ENCODE measurements at regions of chr2 and their contacts with region 1.

Region 1: GRCh38 chr2:231452799-231453508 is 11.3 kb downstream of the NCL start:
- DNase-seq: peak in 1 of 2 experiments; percentile 53
- H3K4me3 ChIP-seq: no peak overlapping the region
- H3K27ac ChIP-seq: peak overlapping the region; percentile 45
- H3K4me1 ChIP-seq: no peaks in the 10 kb centered on the region
- H3K27me3 ChIP-seq: no peaks in the 10 kb centered on the region
- CTCF ChIP-seq: no peak

Region 2: GRCh38 chr2:229780856-229781773 is 1671.8 kb before region 1 on chr2:
- CTCF ChIA-PET with region 1: no interaction called
- POLR2A ChIA-PET with region 1: interaction called, 11 read pairs
- intact Hi-C with region 1: no loop called
- DNase-seq: peak; percentile 1 to 61
- H3K4me3 ChIP-seq: no peak overlapping the region
- H3K27ac ChIP-seq: peak overlapping the region; percentile 33
- H3K4me1 ChIP-seq: peaks cover 10% of the 10 kb centered on the region
- H3K27me3 ChIP-seq: no peaks in the 10 kb centered on the region
- CTCF ChIP-seq: peak; percentile 94

Region 3: GRCh38 chr2:231104115-231104713 is 348.7 kb before region 1 on chr2:
- CTCF ChIA-PET with region 1: interaction called, 5 read pairs
- POLR2A ChIA-PET with region 1: no interaction called
- intact Hi-C with region 1: loop called (anchors 1 kb)
- DNase-seq: peak in 1 of 2 experiments; percentile 31
- H3K4me3 ChIP-seq: no peak overlapping the region
- H3K27ac ChIP-seq: no peak overlapping the region
- H3K4me1 ChIP-seq: no peaks in the 10 kb centered on the region
- H3K27me3 ChIP-seq: no peaks in the 10 kb centered on the region
- CTCF ChIP-seq: peak; percentile 71

Region 4: DNA sequence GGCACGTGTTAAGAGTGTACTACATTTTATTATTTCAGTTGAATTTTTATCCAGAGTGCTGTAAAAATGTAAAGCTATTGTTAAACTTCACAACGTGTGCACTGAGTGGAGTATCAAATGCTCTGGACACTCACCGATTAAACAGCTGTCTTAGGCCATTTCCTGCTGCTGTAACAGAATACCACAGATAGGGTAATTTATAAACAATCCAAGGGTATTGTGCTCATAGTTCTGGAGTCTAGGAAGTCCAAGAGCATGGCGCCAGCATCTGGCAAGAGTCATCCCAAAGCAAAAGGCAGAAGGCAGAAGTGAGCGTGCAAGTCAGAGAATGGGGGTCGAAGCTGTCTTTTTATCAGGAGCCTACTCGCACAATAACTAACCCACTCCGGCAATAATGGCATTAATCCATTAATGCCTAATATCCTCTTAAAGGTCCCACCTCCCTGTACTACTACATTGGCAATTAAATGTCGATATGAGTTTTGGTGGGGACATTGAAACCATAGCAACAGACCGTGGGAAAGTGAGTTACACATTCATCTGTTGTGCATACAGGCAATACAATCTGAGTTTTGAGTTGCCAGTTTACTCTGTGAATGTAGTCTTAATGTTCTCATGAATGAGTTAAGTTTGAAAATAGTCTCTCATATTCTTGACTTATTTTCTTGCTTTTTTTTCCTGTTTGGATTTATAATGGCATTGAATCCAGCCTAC is 189.7 kb before region 1 on chr2:
- CTCF ChIA-PET with region 1: interaction called, 18 read pairs
- POLR2A ChIA-PET with region 1: no interaction called
- intact Hi-C with region 1: no loop called
- DNase-seq: no peak
- H3K4me3 ChIP-seq: no peak overlapping the region
- H3K27ac ChIP-seq: no peak overlapping the region
- H3K4me1 ChIP-seq: no peaks in the 10 kb centered on the region
- H3K27me3 ChIP-seq: no peaks in the 10 kb centered on the region
- CTCF ChIP-seq: no peak

Region 5: GRCh38 chr2:231323316-231323715 is 129.6 kb before region 1 on chr2:
- CTCF ChIA-PET with region 1: no interaction called
- POLR2A ChIA-PET with region 1: no interaction called
- intact Hi-C with region 1: no loop called
- DNase-seq: no peak
- H3K4me3 ChIP-seq: no peak overlapping the region
- H3K27ac ChIP-seq: no peak overlapping the region
- H3K4me1 ChIP-seq: no peaks in the 10 kb centered on the region
- H3K27me3 ChIP-seq: no peaks in the 10 kb centered on the region
- CTCF ChIP-seq: no peak

Region 6: DNA sequence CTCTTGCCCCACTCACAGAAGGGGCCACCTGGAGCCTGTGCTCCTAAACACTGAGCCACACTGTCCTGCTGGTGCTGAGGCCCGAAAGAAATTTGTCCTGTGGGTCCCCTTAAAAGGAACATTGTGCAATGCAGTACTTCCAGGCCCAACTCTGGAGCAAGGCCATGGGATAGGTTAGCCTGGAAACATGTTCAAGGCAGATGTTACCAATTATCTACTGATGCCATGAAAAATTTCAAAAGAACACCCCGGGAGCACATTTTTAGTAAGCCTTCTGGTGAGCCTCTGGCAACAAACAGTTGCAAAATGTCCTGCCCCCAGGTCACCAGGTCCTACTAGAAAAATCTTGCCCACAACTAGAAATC is 243.0 kb after region 1 on chr2:
- CTCF ChIA-PET with region 1: no interaction called
- POLR2A ChIA-PET with region 1: no interaction called
- intact Hi-C with region 1: no loop called
- DNase-seq: no peak
- H3K4me3 ChIP-seq: no peak overlapping the region
- H3K27ac ChIP-seq: no peak overlapping the region
- H3K4me1 ChIP-seq: no peaks in the 10 kb centered on the region
- H3K27me3 ChIP-seq: no peaks in the 10 kb centered on the region
- CTCF ChIP-seq: no peak

Region 7: GRCh38 chr2:231795291-231796040 is 342.5 kb after region 1 on chr2:
- CTCF ChIA-PET with region 1: interaction called, 11 read pairs
- POLR2A ChIA-PET with region 1: no interaction called
- intact Hi-C with region 1: no loop called
- DNase-seq: peak; percentile 74 to 88
- H3K4me3 ChIP-seq: no peak overlapping the region
- H3K27ac ChIP-seq: 0 out of 2 replicates have a peak overlapping the region, but pooled peaks have one; percentile 7
- H3K4me1 ChIP-seq: peaks cover 4% of the 10 kb centered on the region
- H3K27me3 ChIP-seq: no peaks in the 10 kb centered on the region
- CTCF ChIP-seq: peak; percentile 78; the same call in 1 of the 2 replicates